GM12878 (cell line): ENCODE measurements at regions of chr9 and their contacts with region 1.

Region 1: DNA sequence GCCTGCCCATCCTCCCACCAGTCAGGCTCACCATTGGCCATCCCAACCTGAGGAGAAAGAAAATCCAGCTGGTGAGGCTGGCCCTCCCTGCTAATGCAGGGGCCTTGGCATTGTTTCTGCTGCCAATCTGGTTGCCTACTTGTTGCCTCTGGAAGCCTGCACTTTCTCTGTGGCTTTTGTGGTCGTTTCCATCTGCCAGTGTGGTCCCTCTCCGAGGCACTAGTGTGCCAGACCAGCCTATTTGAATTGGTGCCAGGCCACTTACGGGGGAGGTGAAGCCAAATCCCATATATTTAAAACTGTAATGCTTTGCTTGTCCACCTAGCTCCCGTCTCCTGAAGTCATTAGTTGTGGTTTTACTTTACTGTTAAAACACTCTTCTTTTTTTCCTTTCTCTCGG is 213.4 kb upstream of the ADAMTSL1 start:
- DNase-seq: no peak
- ATAC-seq: no peak
- H3K4me3 ChIP-seq: no peak overlapping the region
- H3K27ac ChIP-seq: no peak overlapping the region
- H3K4me1 ChIP-seq: no peaks in the 10 kb centered on the region
- H3K27me3 ChIP-seq: no peaks in the 10 kb centered on the region; a peak in 1 of 4 replicates
- CTCF ChIP-seq: no peak
- EP300 ChIP-seq: no peak
- POLR2A ChIP-seq: no peak
- RAD21 ChIP-seq: no peak

Region 2: DNA sequence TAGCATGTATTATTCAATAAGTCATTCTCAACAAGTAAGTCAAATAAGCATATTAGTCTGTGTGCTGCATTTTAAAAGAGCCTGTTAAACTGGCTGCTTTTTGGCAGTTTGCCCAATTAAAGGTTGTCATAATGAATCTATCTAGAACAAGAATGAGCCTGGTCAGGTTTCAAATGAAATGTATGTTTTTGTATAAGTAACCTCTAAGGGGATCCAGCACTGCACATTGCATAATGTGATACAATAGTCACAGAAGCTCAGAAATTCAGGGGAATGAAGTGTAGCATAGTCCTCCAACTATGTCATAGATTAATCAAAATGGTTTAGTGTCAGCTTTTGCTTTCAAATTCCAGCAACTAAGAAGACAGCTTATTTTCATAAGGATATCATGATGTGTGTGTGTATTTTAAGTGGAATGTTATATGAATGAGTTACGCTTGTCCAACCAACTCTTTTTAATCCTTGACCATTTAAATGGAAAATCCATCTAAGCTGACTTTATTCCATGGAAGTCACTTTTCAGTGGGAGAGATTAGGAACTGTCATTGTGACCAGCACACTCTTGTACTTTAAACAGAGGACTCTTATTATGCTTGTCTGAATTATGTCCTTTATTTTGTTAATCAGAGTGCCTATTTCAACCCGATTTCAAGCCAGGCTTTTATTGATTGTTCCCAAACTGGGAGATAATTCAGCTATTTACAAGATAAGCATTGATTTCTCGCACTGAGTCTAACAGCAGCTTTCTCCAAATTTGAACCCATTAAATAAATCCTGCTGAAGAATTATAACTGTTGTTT is 70.5 kb before region 1 on chr9:
- CTCF ChIA-PET with region 1: no interaction called
- POLR2A ChIA-PET with region 1: no interaction called
- RAD21 ChIA-PET with region 1: no interaction called
- SMC1A ChIA-PET with region 1: no interaction called
- in situ Hi-C with region 1: no loop called
- intact Hi-C with region 1: no loop called
- DNase-seq: no peak
- ATAC-seq: no peak
- H3K4me3 ChIP-seq: no peak overlapping the region
- H3K27ac ChIP-seq: no peak overlapping the region
- H3K4me1 ChIP-seq: no peaks in the 10 kb centered on the region
- H3K27me3 ChIP-seq: no peaks in the 10 kb centered on the region
- CTCF ChIP-seq: no peak
- EP300 ChIP-seq: no peak
- POLR2A ChIP-seq: no peak
- RAD21 ChIP-seq: no peak

Region 3: DNA sequence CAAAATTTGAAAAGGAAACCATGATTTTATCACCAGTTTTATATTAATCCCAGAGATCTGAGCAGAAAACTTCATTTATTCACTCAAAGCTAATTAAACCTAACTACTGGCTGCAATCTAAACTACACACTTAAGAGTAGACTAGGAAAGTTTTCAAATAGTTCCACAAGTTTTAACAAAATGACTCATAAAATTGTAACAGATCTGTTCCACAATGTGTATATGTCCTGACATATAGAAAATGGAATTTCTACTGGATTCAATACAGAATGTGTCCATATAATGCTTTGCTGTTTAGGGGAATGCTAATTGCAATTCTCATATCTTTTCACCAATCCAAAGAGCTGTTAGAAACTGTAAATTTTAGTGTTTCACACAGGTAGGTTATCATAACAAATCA is 173.1 kb after region 1 on chr9:
- CTCF ChIA-PET with region 1: no interaction called
- POLR2A ChIA-PET with region 1: no interaction called
- RAD21 ChIA-PET with region 1: no interaction called
- SMC1A ChIA-PET with region 1: no interaction called
- in situ Hi-C with region 1: loop called (anchors 5 kb)
- intact Hi-C with region 1: no loop called
- DNase-seq: no peak
- ATAC-seq: no peak
- H3K4me3 ChIP-seq: no peak overlapping the region
- H3K27ac ChIP-seq: no peak overlapping the region
- H3K4me1 ChIP-seq: no peaks in the 10 kb centered on the region
- H3K27me3 ChIP-seq: no peaks in the 10 kb centered on the region
- CTCF ChIP-seq: no peak
- EP300 ChIP-seq: no peak
- POLR2A ChIP-seq: no peak
- RAD21 ChIP-seq: no peak